ENCODE measurements at regions of chr7 and their contacts with region 1.

Region 1: GRCh38 chr7:55546829-55547228 is 25.5 kb downstream of the VOPP1 start:
- DNase-seq: no peak
- CTCF ChIP-seq: no peak

Region 2: DNA sequence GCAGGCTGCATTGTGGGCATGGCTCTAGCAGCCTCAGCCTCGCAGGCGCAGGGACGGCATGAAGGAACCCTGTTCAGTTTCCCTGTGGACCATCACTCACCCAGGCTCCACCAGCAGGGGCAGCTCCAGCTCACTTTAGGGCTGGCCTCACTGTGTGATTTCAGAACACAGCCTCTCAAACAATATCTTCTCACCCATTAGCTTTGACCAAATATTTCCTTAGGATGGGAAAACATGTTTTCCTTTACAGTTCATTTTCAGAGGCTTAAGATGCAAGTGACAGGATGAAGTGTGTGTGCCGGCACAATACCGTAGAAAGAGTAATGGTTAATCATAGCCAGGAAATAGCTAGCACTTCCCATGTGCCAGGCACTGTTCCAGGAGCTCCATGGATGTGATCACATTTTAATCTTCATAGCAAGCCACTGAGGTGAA is 123.5 kb before region 1 on chr7:
- CTCF ChIA-PET with region 1: no interaction called
- POLR2A ChIA-PET with region 1: no interaction called
- DNase-seq: no peak
- CTCF ChIP-seq: no peak

Region 3: DNA sequence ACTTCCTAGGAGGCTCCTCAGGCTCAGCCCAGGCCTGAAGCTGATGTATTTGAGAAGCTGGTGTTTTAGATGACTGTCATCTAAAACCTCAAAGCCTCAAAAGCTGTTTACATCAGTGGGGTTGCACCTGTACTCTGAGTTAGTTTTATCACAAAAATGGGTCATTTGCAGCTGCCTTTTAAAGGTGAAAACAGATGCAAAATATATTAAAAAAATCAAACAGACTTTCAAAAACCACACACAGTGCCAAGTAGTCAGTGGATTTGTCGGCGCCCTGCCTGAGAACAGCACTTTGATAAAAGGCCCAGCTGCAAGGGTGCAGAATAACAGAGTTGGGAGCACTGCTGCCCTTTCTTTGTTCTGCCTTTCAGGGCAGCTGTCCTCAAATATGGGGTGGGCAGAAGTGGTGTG is 77.6 kb before region 1 on chr7:
- CTCF ChIA-PET with region 1: no interaction called
- POLR2A ChIA-PET with region 1: no interaction called
- DNase-seq: no peak
- CTCF ChIP-seq: no peak

Region 4: GRCh38 chr7:55493408-55493807 is 53.4 kb before region 1 on chr7:
- CTCF ChIA-PET with region 1: no interaction called
- POLR2A ChIA-PET with region 1: no interaction called
- DNase-seq: no peak
- CTCF ChIP-seq: no peak

Region 5: DNA sequence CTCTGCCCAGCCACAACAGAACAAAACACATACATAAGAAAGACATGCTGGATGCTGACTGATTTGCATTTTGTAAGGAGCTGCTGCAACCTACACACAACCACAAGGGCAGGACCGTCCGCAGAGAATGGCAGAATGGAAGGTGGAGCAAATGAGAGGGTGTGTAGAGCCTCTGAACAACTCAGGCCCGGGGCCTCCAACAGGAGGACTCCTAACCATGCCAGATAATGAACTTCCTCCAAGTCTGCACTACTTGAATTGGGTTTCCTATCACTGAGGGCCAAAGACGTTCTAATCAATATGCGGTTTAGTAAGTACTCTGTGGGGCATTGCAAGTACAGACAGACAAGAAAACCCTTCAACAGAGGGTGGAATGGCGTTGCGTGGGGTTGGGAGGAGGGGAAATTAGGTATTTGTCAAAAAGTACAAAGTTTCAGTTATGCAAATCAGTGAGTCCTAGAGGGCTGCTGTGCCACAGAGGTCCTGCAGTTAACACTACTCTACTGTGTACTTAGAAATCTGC is 10.9 kb after region 1 on chr7:
- CTCF ChIA-PET with region 1: interaction called, 36 read pairs
- POLR2A ChIA-PET with region 1: interaction called, 5 read pairs
- DNase-seq: peak; percentile 76
- CTCF ChIP-seq: no peak

Region 6: GRCh38 chr7:55622241-55622640 is 75.4 kb after region 1 on chr7:
- CTCF ChIA-PET with region 1: no interaction called
- POLR2A ChIA-PET with region 1: no interaction called
- DNase-seq: no peak
- CTCF ChIP-seq: no peak